ENCODE measurements at regions of chr2 and their contacts with region 1.

Region 1: GRCh38 chr2:74919827-74920226 is 38.6 kb upstream of the POLE4 start:
- DNase-seq: peak; percentile 57 to 95
- H3K4me3 ChIP-seq: peak overlapping the region; percentile 16 to 58 (median 38); a peak in 5 of 8 replicates
- H3K27ac ChIP-seq: no peak overlapping the region
- H3K4me1 ChIP-seq: no peaks in the 10 kb centered on the region
- H3K27me3 ChIP-seq: peaks cover 0 to 2% (median 0%) of the 10 kb centered on the region in 4 experiments; a peak in 1 of 7 replicates
- CTCF ChIP-seq: peak; percentile 75 to 97 (median 86)
- EP300 ChIP-seq: no peak
- POLR2A ChIP-seq: no peak
- RAD21 ChIP-seq: peak; percentile 92 to 96

Region 2: GRCh38 chr2:74942263-74942662 is 22.4 kb after region 1 on chr2:
- CTCF ChIA-PET with region 1: interaction called, 10 read pairs
- POLR2A ChIA-PET with region 1: no interaction called
- DNase-seq: no peak
- H3K4me3 ChIP-seq: no peak overlapping the region
- H3K27ac ChIP-seq: no peak overlapping the region
- H3K4me1 ChIP-seq: no peaks in the 10 kb centered on the region
- H3K27me3 ChIP-seq: no peaks in the 10 kb centered on the region
- CTCF ChIP-seq: no peak
- EP300 ChIP-seq: no peak
- POLR2A ChIP-seq: no peak
- RAD21 ChIP-seq: no peak

Region 3: GRCh38 chr2:74958274-74959105 is 38.7 kb after region 1 on chr2 and contains the start of gene POLE4:
- CTCF ChIA-PET with region 1: interaction called, 11 read pairs
- POLR2A ChIA-PET with region 1: no interaction called
- DNase-seq: peak; percentile 54 to 95
- H3K4me3 ChIP-seq: peak within 1 kb of the TSS; percentile 61 to 69 (median 64)
- H3K27ac ChIP-seq: peak within 1 kb of the TSS; percentile 91
- H3K4me1 ChIP-seq: peaks cover 0 to 3% (median 2%) of the 10 kb centered on the region in 4 experiments; a peak in 3 of 7 replicates
- H3K27me3 ChIP-seq: peaks cover 0 to 17% (median 11%) of the 10 kb centered on the region in 4 experiments; a peak in 6 of 7 replicates
- CTCF ChIP-seq: no peak
- EP300 ChIP-seq: no peak
- POLR2A ChIP-seq: peak; percentile 89
- RAD21 ChIP-seq: no peak; a peak in 1 of 4 replicates
- total RNA-seq, gene POLE4: 44.4 and 44.7 TPM in 2 replicates

Region 4: GRCh38 chr2:74982577-74982976 is 62.8 kb after region 1 on chr2:
- CTCF ChIA-PET with region 1: interaction called, 15 read pairs
- POLR2A ChIA-PET with region 1: no interaction called
- DNase-seq: no peak
- H3K4me3 ChIP-seq: no peak overlapping the region
- H3K27ac ChIP-seq: no peak overlapping the region
- H3K4me1 ChIP-seq: no peaks in the 10 kb centered on the region; a peak in 1 of 7 replicates
- H3K27me3 ChIP-seq: no peaks in the 10 kb centered on the region
- CTCF ChIP-seq: peak in 2 of 3 experiments; percentile 10 to 13; a peak in 2 of 4 replicates
- EP300 ChIP-seq: no peak
- POLR2A ChIP-seq: no peak
- RAD21 ChIP-seq: peak; percentile 18 to 33; a peak in 3 of 4 replicates

Region 5: DNA sequence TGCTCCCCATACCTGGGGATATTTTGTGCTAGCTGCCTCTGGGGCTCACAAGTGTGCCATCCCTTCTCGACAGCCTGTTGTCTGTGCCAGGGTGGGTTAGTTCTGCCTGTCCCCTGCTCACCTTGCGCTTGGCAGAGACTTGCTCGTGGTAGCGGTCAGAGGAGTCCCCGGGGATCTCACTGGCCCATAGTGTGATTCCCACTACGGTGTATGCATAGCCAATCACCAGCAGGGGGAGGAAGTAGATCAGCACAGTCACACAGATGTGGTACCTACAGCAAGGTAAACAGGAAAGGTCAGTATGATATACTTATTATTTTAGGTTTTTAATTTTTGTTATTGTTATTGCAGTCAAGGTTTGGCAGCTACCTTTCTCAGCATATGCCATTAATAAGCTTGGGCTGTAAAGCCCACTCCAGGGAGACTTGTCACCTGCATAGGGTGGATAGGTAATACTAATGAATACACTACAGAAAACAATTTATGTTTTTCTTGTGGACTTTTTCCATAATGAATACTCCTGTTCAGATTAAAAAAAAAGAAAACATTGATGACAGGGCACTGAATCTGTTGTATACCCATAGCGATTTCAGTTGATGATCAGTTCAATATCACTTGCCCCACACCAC is 133.8 kb after region 1 on chr2:
- CTCF ChIA-PET with region 1: interaction called, 23 read pairs
- POLR2A ChIA-PET with region 1: no interaction called
- DNase-seq: peak; percentile 31 to 66
- H3K4me3 ChIP-seq: no peak overlapping the region
- H3K27ac ChIP-seq: no peak overlapping the region
- H3K4me1 ChIP-seq: peaks cover 9 to 35% (median 14%) of the 10 kb centered on the region in 4 experiments; a peak in 6 of 7 replicates
- H3K27me3 ChIP-seq: peaks cover 0 to 4% (median 2%) of the 10 kb centered on the region in 4 experiments; a peak in 4 of 7 replicates
- CTCF ChIP-seq: peak; percentile 74 to 93 (median 77)
- EP300 ChIP-seq: no peak
- POLR2A ChIP-seq: no peak
- RAD21 ChIP-seq: peak; percentile 84 to 90

Region 6: DNA sequence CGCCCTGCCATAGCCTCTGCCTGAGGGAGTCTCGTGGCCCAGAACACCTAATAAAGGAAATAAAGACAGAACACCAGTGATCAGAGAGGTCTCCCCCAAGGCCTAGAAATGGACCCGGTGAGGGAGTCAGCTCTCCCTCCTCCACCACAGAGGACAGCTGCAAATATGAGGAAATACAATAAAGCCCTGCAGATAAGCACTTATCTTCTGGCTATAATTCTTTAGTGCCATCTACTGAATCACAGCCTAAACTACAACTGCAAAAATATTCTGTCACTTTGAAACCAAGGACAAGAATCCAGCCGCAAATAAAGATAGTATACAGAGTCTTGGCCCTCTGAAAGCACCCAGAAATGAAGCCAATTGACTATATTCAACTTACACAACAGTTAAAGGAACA is 321.9 kb after region 1 on chr2:
- CTCF ChIA-PET with region 1: interaction called, 14 read pairs
- POLR2A ChIA-PET with region 1: no interaction called
- DNase-seq: no peak
- H3K4me3 ChIP-seq: no peak overlapping the region
- H3K27ac ChIP-seq: no peak overlapping the region
- H3K4me1 ChIP-seq: no peaks in the 10 kb centered on the region
- H3K27me3 ChIP-seq: no peaks in the 10 kb centered on the region
- CTCF ChIP-seq: peak in 2 of 3 experiments; percentile 61 to 62; a peak in 3 of 4 replicates
- EP300 ChIP-seq: no peak
- POLR2A ChIP-seq: no peak
- RAD21 ChIP-seq: peak; percentile 79 to 84

Measured in H1 (cell line).